ENCODE measurements at regions of chr6 and their contacts with region 1.

Region 1: GRCh38 chr6:57172136-57173055 is at the start of gene BAG2:
- DNase-seq: peak; percentile 94
- ATAC-seq: peak; percentile 86
- H3K4me3 ChIP-seq: peak within 1 kb of the TSS; percentile 65 to 83 (median 79)
- H3K4me3 Mint-ChIP-seq: peak within 1 kb of the TSS; percentile 89
- H3K27ac ChIP-seq: peak within 1 kb of the TSS; percentile 77 to 88
- H3K27ac Mint-ChIP-seq: peak within 1 kb of the TSS; percentile 88
- H3K4me1 ChIP-seq: peaks cover 9 to 18% of the 10 kb centered on the region in 2 donors
- H3K4me1 Mint-ChIP-seq: peaks cover 17% of the 10 kb centered on the region
- H3K27me3 ChIP-seq: no peaks in the 10 kb centered on the region
- H3K27me3 Mint-ChIP-seq: no peaks in the 10 kb centered on the region
- CTCF ChIP-seq: no peak
- total RNA-seq, gene BAG2: 4.6 and 4.7 TPM in 2 replicates

Region 2: GRCh38 chr6:56524891-56525703 is 647.3 kb before region 1 on chr6:
- CTCF ChIA-PET with region 1: no interaction called
- POLR2A ChIA-PET with region 1: no interaction called
- intact Hi-C with region 1: no loop called
- DNase-seq: no peak
- ATAC-seq: no peak
- H3K4me3 ChIP-seq: no peak overlapping the region
- H3K4me3 Mint-ChIP-seq: no peak overlapping the region
- H3K27ac ChIP-seq: no peak overlapping the region
- H3K27ac Mint-ChIP-seq: no peak overlapping the region
- H3K4me1 ChIP-seq: no peaks in the 10 kb centered on the region
- H3K4me1 Mint-ChIP-seq: no peaks in the 10 kb centered on the region
- H3K27me3 ChIP-seq: no peaks in the 10 kb centered on the region
- H3K27me3 Mint-ChIP-seq: no peaks in the 10 kb centered on the region
- CTCF ChIP-seq: no peak

Region 3: DNA sequence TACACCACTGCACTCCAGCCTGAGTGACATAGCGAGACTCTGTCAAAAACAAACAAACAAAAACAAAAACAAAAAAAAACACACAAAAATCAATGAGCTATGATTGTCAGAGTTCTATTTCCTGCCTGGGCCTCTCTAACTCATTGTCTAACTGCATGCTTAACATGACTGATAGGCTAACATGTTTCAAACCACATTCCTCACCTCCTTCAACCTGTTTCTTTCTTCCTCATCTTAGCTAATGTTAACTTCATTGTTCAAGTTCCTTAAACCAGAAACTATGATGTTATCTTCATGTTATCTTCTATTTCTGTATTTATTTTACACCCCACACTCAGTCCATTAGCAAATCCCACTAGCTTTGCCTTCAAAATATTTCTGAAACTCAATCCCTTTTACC is 176.0 kb before region 1 on chr6:
- CTCF ChIA-PET with region 1: no interaction called
- POLR2A ChIA-PET with region 1: no interaction called
- intact Hi-C with region 1: no loop called
- DNase-seq: no peak
- ATAC-seq: no peak
- H3K4me3 ChIP-seq: no peak overlapping the region
- H3K4me3 Mint-ChIP-seq: no peak overlapping the region
- H3K27ac ChIP-seq: no peak overlapping the region
- H3K27ac Mint-ChIP-seq: no peak overlapping the region
- H3K4me1 ChIP-seq: no peaks in the 10 kb centered on the region
- H3K4me1 Mint-ChIP-seq: no peaks in the 10 kb centered on the region
- H3K27me3 ChIP-seq: no peaks in the 10 kb centered on the region
- H3K27me3 Mint-ChIP-seq: peaks cover 16% of the 10 kb centered on the region
- CTCF ChIP-seq: no peak

Region 4: DNA sequence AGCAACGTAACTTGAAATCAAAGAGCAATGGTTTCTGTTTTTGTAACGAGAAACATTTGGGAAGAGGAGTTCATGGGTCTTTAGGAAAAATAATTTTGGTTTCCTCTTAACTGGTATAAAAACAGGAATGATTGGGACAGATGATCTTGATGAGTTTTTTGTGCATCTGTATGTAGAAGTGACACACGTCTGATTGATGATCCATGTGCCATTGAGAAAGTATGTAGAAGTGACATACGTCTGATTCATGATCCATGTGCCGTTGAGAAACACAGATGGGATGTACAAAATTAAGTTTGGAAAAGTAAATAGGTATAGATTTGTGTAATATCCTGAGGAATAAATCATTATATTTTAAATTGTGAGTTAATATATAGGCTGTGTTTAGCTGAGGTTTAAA is 123.8 kb before region 1 on chr6:
- CTCF ChIA-PET with region 1: no interaction called
- POLR2A ChIA-PET with region 1: no interaction called
- intact Hi-C with region 1: loop called (anchors 2 kb)
- DNase-seq: no peak
- ATAC-seq: no peak
- H3K4me3 ChIP-seq: no peak overlapping the region
- H3K4me3 Mint-ChIP-seq: peak overlapping the region; percentile 18
- H3K27ac ChIP-seq: no peak overlapping the region
- H3K27ac Mint-ChIP-seq: no peak overlapping the region
- H3K4me1 ChIP-seq: peaks cover 4 to 5% of the 10 kb centered on the region in 2 donors
- H3K4me1 Mint-ChIP-seq: peaks cover 19% of the 10 kb centered on the region
- H3K27me3 ChIP-seq: no peaks in the 10 kb centered on the region
- H3K27me3 Mint-ChIP-seq: no peaks in the 10 kb centered on the region
- CTCF ChIP-seq: no peak

Region 5: DNA sequence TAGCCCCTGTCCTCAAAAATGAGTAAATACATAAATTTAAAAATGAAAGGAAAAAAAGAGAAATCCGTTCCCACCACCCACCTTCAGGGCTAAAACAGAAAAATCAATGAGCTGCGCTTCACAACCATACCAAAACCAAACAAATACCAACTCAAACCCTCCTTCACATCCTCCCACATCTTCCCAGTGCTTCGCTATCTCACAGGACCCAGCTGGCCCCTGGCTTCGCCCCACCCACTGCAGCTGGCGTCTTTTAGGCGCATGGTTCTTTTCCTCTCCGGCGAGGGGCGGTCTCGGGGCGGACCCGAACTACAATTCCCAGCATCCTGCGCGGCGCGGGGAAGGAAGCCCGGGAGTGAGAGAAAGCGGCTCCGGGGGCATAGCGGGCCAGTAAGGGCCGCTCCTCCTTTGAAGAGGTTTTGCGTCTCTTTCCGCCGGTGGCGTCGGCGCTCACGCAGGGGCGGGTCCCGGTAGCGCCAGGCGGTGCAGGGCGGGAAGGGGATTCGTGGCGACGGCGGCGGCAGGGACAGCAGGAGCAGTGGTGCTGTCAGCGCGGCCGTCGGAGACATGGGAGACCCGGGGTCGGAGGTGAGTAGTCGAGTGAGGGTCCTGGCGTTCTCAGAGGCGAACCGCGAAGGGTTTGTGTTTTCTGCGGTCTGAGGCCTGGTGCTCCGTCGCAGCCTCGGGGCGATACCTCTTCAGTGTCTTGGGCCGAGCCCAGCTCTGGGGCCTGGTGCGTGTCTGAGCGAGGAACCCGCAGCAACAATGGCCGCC is 82.5 kb before region 1 on chr6 and contains the start of gene ZNF451:
- CTCF ChIA-PET with region 1: no interaction called
- POLR2A ChIA-PET with region 1: interaction called, 4 read pairs
- intact Hi-C with region 1: loop called (anchors 1 kb)
- DNase-seq: peak; percentile 96
- ATAC-seq: peak; percentile 94
- H3K4me3 ChIP-seq: peak within 1 kb of the TSS; percentile 50 to 66 (median 58)
- H3K4me3 Mint-ChIP-seq: peak within 1 kb of the TSS; percentile 85
- H3K27ac ChIP-seq: peak within 1 kb of the TSS; percentile 64 to 81
- H3K27ac Mint-ChIP-seq: peak within 1 kb of the TSS; percentile 94
- H3K4me1 ChIP-seq: peaks cover 11 to 14% of the 10 kb centered on the region in 2 donors
- H3K4me1 Mint-ChIP-seq: peaks cover 29% of the 10 kb centered on the region
- H3K27me3 ChIP-seq: no peaks in the 10 kb centered on the region
- H3K27me3 Mint-ChIP-seq: no peaks in the 10 kb centered on the region
- CTCF ChIP-seq: no peak
- total RNA-seq, gene ZNF451: 86.3 and 106 TPM in 2 replicates

Region 6: GRCh38 chr6:57108691-57109090 is 63.7 kb before region 1 on chr6:
- CTCF ChIA-PET with region 1: no interaction called
- POLR2A ChIA-PET with region 1: no interaction called
- intact Hi-C with region 1: no loop called
- DNase-seq: peak; percentile 47
- ATAC-seq: peak; percentile 74
- H3K4me3 ChIP-seq: no peak overlapping the region
- H3K4me3 Mint-ChIP-seq: peak overlapping the region; percentile 38
- H3K27ac ChIP-seq: no peak overlapping the region
- H3K27ac Mint-ChIP-seq: peak overlapping the region; percentile 11
- H3K4me1 ChIP-seq: peaks cover 14 to 30% of the 10 kb centered on the region in 2 donors
- H3K4me1 Mint-ChIP-seq: peaks cover 38% of the 10 kb centered on the region
- H3K27me3 ChIP-seq: no peaks in the 10 kb centered on the region
- H3K27me3 Mint-ChIP-seq: no peaks in the 10 kb centered on the region
- CTCF ChIP-seq: no peak

Region 7: DNA sequence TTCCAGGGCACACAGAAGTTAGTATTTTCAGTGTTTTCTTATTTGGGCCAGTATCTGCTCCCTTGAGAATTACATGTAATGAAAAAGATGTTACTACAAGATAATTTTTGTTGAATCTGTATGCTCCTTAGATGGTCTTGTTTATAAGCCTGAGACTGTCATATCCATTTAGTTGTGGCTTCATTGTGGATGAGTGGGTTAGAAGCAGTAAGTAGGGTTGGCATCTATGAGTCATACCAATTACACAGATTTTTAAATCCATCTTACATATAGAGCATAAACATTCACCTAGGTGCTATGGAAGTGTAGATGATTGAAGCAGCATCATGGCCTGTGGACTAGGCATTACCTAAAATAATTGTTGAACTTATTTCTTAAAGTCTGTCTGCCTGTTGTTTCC is 13.7 kb before region 1 on chr6:
- CTCF ChIA-PET with region 1: no interaction called
- POLR2A ChIA-PET with region 1: no interaction called
- intact Hi-C with region 1: no loop called
- DNase-seq: no peak
- ATAC-seq: no peak
- H3K4me3 ChIP-seq: no peak overlapping the region
- H3K4me3 Mint-ChIP-seq: no peak overlapping the region
- H3K27ac ChIP-seq: no peak overlapping the region
- H3K27ac Mint-ChIP-seq: no peak overlapping the region
- H3K4me1 ChIP-seq: no peaks in the 10 kb centered on the region
- H3K4me1 Mint-ChIP-seq: no peaks in the 10 kb centered on the region
- H3K27me3 ChIP-seq: no peaks in the 10 kb centered on the region
- H3K27me3 Mint-ChIP-seq: no peaks in the 10 kb centered on the region
- CTCF ChIP-seq: no peak

Region 8: DNA sequence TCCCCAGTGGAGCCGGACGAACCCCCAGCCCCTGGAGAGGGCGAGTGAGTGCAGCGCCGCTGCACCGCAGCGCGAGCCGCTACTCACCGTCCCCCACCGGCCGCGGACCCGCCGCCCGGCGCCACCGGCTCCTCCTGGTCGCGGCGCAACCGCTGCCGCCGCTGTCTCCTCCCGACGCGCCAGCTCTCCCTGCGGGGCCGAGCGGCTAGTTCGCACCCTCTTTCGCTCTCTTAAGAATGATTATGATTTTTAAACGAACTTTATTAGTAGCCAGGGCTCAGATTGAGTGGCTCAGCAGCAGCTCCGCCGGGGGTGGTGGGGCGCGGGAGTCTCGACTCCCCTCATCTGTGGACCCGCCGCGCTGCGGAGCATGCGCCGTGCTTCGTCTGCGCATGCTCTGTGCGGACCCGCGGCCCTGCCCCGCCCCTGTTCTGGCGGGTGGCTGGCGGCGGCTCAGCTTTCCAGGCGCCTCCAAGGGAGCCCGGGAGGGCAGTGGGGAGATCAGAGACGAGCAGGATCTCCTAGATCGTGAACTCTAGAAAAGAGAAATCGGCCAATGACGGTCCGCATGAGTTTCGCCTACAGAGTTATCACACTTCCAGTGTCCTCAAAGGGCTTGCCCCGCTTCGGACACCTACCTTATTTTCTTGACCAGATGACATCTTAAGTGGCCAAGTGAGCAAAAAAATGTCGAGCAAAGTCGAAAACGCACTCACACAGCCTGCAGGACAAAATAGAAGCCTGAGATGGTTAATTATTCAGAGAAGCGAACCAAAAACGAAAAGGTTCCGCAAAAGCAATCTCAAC is 49.7 kb after region 1 on chr6 and contains the start of gene RAB23:
- CTCF ChIA-PET with region 1: no interaction called
- POLR2A ChIA-PET with region 1: interaction called, 4 read pairs
- intact Hi-C with region 1: loop called (anchors 1 kb)
- DNase-seq: peak; percentile 91
- ATAC-seq: peak; percentile 89
- H3K4me3 ChIP-seq: peak within 1 kb of the TSS; percentile 76 to 95 (median 90)
- H3K4me3 Mint-ChIP-seq: peak within 1 kb of the TSS; percentile 99
- H3K27ac ChIP-seq: peak within 1 kb of the TSS in 1 of 2 donors; percentile 46
- H3K27ac Mint-ChIP-seq: peak within 1 kb of the TSS; percentile 93
- H3K4me1 ChIP-seq: peaks cover 10 to 13% of the 10 kb centered on the region in 2 donors
- H3K4me1 Mint-ChIP-seq: peaks cover 15% of the 10 kb centered on the region
- H3K27me3 ChIP-seq: peaks cover 0 to 15% (median 4%) of the 10 kb centered on the region in 4 experiments
- H3K27me3 Mint-ChIP-seq: peaks cover 22% of the 10 kb centered on the region
- CTCF ChIP-seq: peak; percentile 24
- total RNA-seq, gene RAB23: 0.78 and 0.94 TPM in 2 replicates

Measured in B cell (primary cell).